Gastrocnemius medialis (tissue), 4 donors: ENCODE measurements at regions of chr21 and their contacts with region 1.

Region 1: DNA sequence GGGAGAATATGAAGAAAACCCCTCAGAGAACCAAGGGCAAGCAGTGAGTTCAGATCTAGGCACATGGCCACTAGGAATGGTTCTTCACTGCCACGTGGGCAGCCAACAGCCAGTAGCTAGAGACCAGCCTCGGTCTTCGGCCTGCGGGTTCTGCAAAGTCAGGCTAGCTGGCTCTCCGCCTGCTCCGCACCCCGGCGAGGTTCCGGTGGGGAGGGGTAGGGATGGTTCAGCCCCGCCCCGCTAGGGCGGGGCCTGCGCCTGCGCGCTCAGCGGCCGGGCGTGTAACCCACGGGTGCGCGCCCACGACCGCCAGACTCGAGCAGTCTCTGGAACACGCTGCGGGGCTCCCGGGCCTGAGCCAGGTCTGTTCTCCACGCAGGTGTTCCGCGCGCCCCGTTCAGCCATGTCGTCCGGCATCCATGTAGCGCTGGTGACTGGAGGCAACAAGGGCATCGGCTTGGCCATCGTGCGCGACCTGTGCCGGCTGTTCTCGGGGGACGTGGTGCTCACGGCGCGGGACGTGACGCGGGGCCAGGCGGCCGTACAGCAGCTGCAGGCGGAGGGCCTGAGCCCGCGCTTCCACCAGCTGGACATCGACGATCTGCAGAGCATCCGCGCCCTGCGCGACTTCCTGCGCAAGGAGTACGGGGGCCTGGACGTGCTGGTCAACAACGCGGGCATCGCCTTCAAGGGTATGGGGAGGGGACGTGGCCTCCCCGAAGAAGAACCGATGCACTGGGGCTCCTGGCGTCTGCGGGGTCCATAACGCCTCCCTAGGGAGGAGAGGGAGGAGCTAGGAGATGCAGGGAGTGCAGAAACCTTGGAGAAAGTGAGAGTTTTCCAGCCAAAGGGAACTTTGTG is at the start of gene CBR1:
- DNase-seq: peak; percentile 87 to 95
- ATAC-seq: peak; percentile 93 to 95
- H3K4me3 ChIP-seq: peak within 1 kb of the TSS; percentile 82 to 94 (median 92)
- H3K27ac ChIP-seq: peak within 1 kb of the TSS; percentile 75 to 90 (median 79)
- H3K4me1 ChIP-seq: peaks cover 39% of the 10 kb centered on the region in 2 donors
- H3K27me3 ChIP-seq: no peaks in the 10 kb centered on the region
- CTCF ChIP-seq: peak in 1 of 5 experiments; percentile 24
- POLR2A ChIP-seq: peak; percentile 59 to 66
- total RNA-seq, gene CBR1: 44.8 to 73.9 (median 66.4) TPM

Region 2: DNA sequence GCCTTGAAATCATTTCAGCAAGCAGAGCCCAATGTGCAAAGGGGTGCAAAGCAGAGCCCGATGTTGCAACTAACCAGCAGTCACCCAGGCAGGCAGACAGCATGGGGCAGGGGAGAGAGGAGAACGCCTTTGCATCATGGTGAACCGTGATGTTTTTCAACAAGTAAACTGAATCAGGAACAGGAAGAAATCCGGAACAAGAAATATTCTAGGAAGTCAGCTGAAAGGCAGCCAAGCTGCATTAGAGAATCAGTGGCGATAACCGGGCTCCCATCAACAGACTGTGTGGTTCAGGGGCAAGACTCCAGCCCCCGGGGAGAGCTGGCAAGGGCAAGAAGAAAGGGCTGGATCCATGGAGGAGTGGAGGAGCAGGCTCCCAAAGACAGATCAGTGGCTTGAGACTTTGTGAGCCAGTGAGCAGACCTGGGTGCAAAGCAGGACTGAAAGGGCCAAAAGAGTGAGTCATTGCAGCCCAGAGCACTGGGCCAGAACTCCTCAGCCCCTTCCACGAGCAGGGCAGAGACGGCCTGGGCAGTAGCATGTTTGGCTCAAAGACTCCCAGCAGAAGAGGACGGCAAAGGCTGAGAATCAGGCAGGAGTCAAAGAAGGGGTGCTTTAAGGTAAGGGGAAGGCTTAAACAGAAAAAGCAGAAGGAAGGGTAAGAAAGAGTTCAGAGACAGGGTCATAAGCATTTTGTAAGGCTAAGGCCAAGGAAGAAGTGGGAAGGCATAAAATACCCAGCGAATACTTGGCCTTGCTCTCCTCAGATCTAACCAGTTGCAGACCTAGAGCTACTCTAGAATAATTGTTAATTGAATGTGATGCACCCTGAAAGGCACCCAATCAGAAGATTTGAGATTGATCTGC is 164.6 kb before region 1 on chr21:
- in situ Hi-C with region 1: no loop called
- intact Hi-C with region 1: no loop called
- DNase-seq: peak in 1 of 2 donors; percentile 43
- ATAC-seq: peak; percentile 36 to 49
- H3K4me3 ChIP-seq: no peak overlapping the region
- H3K27ac ChIP-seq: peak overlapping the region; percentile 7 to 58 (median 27)
- H3K4me1 ChIP-seq: no peaks in the 10 kb centered on the region
- H3K27me3 ChIP-seq: no peaks in the 10 kb centered on the region
- CTCF ChIP-seq: no peak
- POLR2A ChIP-seq: no peak

Region 3: GRCh38 chr21:36103434-36103833 is 33.5 kb after region 1 on chr21:
- in situ Hi-C with region 1: no loop called
- intact Hi-C with region 1: no loop called
- DNase-seq: no peak
- ATAC-seq: no peak
- H3K4me3 ChIP-seq: no peak overlapping the region
- H3K27ac ChIP-seq: no peak overlapping the region
- H3K4me1 ChIP-seq: peaks cover 4 to 7% of the 10 kb centered on the region in 2 donors
- H3K27me3 ChIP-seq: no peaks in the 10 kb centered on the region
- CTCF ChIP-seq: no peak
- POLR2A ChIP-seq: no peak

Region 4: GRCh38 chr21:36113647-36114428 is 43.9 kb after region 1 on chr21:
- in situ Hi-C with region 1: no loop called
- intact Hi-C with region 1: loop called (anchors 5 kb)
- DNase-seq: no peak
- ATAC-seq: no peak
- H3K4me3 ChIP-seq: peak overlapping the region in 1 of 4 donors; percentile 55
- H3K27ac ChIP-seq: peak overlapping the region in 1 of 4 donors; percentile 65
- H3K4me1 ChIP-seq: peaks cover 4 to 5% of the 10 kb centered on the region in 2 donors
- H3K27me3 ChIP-seq: no peaks in the 10 kb centered on the region
- CTCF ChIP-seq: no peak
- POLR2A ChIP-seq: no peak